ENCODE measurements at regions of chr17 and their contacts with region 1.

Region 1: GRCh38 chr17:75814900-75815373 is 29.3 kb downstream of the UNC13D start:
- DNase-seq: peak; percentile 79 to 93 (median 91)
- H3K4me3 ChIP-seq: no peak overlapping the region
- H3K27ac ChIP-seq: peak overlapping the region; percentile 76 to 97 (median 87)
- H3K4me1 ChIP-seq: peaks cover 9 to 12% of the 10 kb centered on the region in 2 donors
- H3K27me3 ChIP-seq: no peaks in the 10 kb centered on the region
- CTCF ChIP-seq: no peak
- POLR2A ChIP-seq: peak in 1 of 2 donors; percentile 56

Region 2: DNA sequence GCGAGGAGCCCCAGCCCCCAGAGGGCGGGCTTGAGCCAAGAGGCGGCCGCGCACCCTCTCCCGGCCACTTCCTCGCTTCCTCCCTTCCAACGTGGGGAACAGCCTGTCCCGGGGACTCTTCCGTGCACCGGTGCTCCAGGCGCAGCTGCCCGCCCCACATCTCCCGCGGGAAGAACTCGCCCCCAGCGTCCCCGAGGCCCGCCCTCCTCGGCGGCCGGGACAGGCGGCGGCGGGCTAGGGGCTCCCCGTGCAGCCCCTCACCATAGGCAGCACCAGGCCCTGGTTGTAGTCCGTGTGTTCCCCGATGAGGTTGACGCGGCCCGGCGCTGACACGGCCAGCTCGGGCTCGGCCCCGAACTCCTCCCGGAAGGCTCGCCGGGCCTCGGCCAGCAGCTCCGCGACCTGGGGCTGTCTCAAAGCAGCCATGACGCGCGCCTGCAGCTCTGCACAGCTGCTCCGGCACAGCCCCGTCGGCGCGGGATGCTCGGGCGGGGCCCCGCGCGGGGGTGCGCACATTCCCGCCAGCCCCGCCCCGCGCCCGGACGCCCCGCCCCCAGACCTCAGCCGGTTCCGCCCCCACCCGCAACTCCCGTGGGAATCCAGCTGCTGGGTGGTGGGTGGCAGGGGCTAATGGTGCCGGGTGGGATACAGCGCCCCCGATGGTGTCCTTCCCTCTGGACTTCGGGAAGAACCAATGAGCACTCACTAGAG is 50.1 kb before region 1 on chr17 and contains the start of gene GALK1:
- intact Hi-C with region 1: loop called (anchors 10 kb)
- DNase-seq: peak; percentile 67 to 81 (median 75)
- H3K4me3 ChIP-seq: peak within 1 kb of the TSS; percentile 16 to 57 (median 50)
- H3K27ac ChIP-seq: peak within 1 kb of the TSS in 4 of 5 donors; percentile 40 to 91 (median 76)
- H3K4me1 ChIP-seq: peaks cover 2 to 13% of the 10 kb centered on the region in 2 donors
- H3K27me3 ChIP-seq: no peaks in the 10 kb centered on the region
- CTCF ChIP-seq: peak in 5 of 6 experiments; percentile 18 to 58 (median 49)
- POLR2A ChIP-seq: peak; percentile 38 to 55
- total RNA-seq, gene GALK1: 13.9 to 47.3 (median 24.7) TPM

Measured in adrenal gland (tissue), 19 donors.